HEK293 (cell line): ENCODE measurements at regions of chr10 and their contacts with region 1.

Region 1: GRCh38 chr10:77590344-77591237 is 47.0 kb downstream of the KCNMA1 start:
- H3K4me3 ChIP-seq: no peak overlapping the region
- H3K27ac ChIP-seq: no peak overlapping the region
- H3K4me1 ChIP-seq: peaks cover 3% of the 10 kb centered on the region; the same call in 1 of the 2 replicates
- CTCF ChIP-seq: no peak

Region 2: DNA sequence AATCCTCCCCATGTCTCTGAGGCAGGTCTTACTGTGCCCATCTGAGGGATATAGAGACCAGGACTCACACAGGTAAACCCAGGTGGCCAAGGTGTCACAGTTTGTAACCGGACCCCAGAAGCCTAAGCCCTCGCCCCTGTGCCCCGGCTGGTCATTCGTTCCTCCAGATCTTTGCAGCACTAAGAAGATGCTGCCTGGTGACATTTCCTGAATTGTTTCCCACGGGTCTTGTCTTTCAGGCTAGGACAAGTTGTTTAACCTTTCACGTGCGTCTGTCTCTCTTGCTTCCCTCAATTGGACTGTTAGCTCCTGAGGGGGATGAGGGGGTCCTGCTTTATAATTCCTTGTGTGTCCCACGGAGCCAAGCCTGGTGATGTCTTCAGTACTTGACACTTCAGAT is 111.0 kb before region 1 on chr10:
- CTCF ChIA-PET with region 1: no interaction called
- POLR2A ChIA-PET with region 1: no interaction called
- H3K4me3 ChIP-seq: no peak overlapping the region
- H3K27ac ChIP-seq: no peak overlapping the region
- H3K4me1 ChIP-seq: peaks cover 11% of the 10 kb centered on the region
- CTCF ChIP-seq: no peak

Region 3: GRCh38 chr10:77562742-77563141 is 27.8 kb before region 1 on chr10:
- CTCF ChIA-PET with region 1: interaction called, 10 read pairs
- POLR2A ChIA-PET with region 1: no interaction called
- H3K4me3 ChIP-seq: no peak overlapping the region
- H3K27ac ChIP-seq: no peak overlapping the region
- H3K4me1 ChIP-seq: no peaks in the 10 kb centered on the region
- CTCF ChIP-seq: no peak

Region 4: DNA sequence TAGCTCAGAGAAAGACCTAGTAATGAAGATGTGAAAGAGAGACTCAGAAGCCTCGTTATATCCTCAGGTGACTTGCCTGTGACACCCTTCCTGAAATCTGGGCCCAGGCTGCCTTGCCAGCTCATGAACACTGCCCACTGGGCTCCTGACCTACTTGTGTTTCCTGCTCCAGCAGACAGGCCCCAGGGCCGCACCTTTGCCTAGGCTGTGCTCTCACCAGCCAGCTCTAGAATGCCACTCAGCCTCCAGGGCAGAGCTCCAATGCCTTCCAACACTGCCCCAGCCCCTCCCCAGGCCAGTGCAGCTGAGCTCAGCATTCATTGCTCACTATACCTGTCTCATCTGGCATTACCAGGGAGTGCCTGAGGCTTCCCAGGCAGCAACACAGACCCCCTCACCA is 241.6 kb after region 1 on chr10:
- CTCF ChIA-PET with region 1: no interaction called
- POLR2A ChIA-PET with region 1: no interaction called
- H3K4me3 ChIP-seq: no peak overlapping the region
- H3K27ac ChIP-seq: no peak overlapping the region
- H3K4me1 ChIP-seq: no peaks in the 10 kb centered on the region; the same call in 1 of the 2 replicates
- CTCF ChIP-seq: no peak

Region 5: DNA sequence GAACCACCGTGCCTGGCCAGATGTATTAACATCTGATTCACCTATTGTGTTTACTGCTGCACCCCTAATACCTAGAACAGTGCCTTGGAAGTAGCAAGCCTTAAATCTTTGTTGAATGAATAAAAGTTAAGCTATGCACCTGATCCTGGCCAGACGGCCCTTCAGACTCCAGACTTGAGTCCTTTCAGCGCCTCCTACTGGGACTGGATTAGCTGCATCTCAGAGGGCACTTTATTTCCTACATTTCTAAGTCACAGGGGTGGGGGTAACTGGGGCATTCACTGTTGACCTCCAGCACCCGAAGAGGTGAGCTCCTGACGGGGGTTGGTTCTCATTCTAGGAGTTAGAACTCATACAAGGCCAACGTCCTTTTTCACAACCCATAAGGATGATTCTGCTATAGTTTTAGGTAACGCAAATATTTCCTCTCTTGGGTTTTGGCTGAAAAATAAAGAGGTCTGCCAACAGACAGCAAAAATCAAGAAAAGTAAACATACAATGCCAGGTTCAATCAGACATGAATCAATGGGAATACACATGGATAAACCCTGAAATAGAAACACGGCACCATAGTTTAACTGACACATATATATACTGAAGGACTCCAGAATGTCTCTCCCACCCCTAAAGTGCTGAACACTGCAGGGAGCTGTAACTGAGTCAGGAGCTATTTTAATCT is 383.9 kb after region 1 on chr10:
- CTCF ChIA-PET with region 1: no interaction called
- POLR2A ChIA-PET with region 1: no interaction called
- H3K4me3 ChIP-seq: no peak overlapping the region
- H3K27ac ChIP-seq: no peak overlapping the region
- H3K4me1 ChIP-seq: no peaks in the 10 kb centered on the region
- CTCF ChIP-seq: no peak